ENCODE measurements at regions of chr19 and their contacts with region 1.

Region 1: DNA sequence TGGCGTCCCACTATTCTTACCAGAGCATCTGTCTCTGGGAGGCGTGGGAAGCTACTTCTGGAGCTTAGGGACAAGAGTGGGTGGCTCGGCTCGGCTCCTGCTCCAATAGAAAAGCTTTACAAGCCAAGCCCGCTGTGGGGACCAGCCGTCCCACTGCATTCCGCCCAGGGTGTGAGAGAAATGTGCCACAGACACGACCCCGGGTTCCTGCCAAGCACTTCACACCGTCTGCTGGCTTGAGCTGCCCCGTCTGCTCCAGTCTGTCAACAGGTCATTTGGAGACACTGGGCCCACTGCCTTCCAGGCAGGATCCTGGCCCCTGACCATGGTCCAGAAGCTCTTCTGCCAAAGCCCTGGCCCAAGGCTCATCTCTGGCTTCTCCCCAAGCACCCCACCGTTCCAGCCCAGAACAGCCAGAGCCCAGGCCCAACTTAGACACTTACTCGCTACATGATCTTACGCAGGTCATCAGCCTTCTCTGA is 6.5 kb upstream of the FKRP start:
- DNase-seq: no peak
- ATAC-seq: no peak
- H3K4me3 ChIP-seq: no peak overlapping the region
- H3K27ac ChIP-seq: no peak overlapping the region
- H3K4me1 ChIP-seq: peaks cover 28% of the 10 kb centered on the region
- H3K27me3 ChIP-seq: no peaks in the 10 kb centered on the region
- CTCF ChIP-seq: no peak
- POLR2A ChIP-seq: no peak
- RAD21 ChIP-seq: no peak

Region 2: GRCh38 chr19:46542428-46543230 is 196.7 kb before region 1 on chr19:
- CTCF ChIA-PET with region 1: no interaction called
- POLR2A ChIA-PET with region 1: no interaction called
- dilution Hi-C with region 1: no loop called
- in situ Hi-C with region 1: no loop called
- intact Hi-C with region 1: no loop called
- DNase-seq: peak; percentile 87
- ATAC-seq: peak; percentile 98
- H3K4me3 ChIP-seq: no peak overlapping the region
- H3K27ac ChIP-seq: no peak overlapping the region
- H3K4me1 ChIP-seq: no peaks in the 10 kb centered on the region
- H3K27me3 ChIP-seq: peaks cover 2% of the 10 kb centered on the region; the same call in 1 of the 2 replicates
- CTCF ChIP-seq: peak; percentile 83
- POLR2A ChIP-seq: no peak
- RAD21 ChIP-seq: peak; percentile 74

Region 3: DNA sequence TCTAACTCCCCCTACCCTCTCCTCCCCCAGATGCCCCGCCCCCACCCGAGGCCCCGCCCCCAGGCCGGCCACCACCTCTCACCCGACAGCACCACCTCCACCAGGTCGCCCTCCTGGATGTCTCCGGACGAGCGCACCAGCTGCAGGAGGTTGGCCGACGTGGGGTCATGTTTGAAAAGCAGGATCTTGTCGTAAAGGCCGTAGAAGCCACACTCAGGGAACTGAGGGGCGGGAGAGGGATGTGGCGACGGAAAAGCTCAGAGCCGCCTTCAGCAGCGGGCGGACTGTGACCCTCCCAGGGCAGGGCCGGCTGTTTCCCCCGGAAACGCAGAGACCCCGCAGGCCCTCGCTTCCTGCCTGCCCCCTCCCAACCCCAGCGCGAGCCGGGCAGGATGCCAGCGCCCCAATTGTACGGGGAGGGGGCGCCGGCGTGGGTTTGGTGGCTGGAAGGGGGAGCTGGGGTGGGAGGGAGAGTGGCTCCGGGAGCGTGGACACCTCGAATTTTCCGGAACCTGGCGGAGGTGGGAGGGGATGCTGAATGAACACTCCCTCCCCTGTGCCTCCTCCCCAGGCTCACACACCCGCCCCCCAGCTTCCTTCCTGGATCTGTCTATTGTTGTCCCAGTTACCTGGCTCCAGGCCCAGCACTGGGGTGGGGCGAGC is 25.4 kb before region 1 on chr19:
- CTCF ChIA-PET with region 1: no interaction called
- POLR2A ChIA-PET with region 1: interaction called, 19 read pairs
- dilution Hi-C with region 1: no loop called
- in situ Hi-C with region 1: no loop called
- intact Hi-C with region 1: no loop called
- DNase-seq: peak; percentile 63
- ATAC-seq: peak; percentile 22
- H3K4me3 ChIP-seq: peak overlapping the region; percentile 42
- H3K27ac ChIP-seq: peak overlapping the region; percentile 45
- H3K4me1 ChIP-seq: peaks cover 7% of the 10 kb centered on the region
- H3K27me3 ChIP-seq: no peaks in the 10 kb centered on the region
- CTCF ChIP-seq: no peak
- POLR2A ChIP-seq: no peak
- RAD21 ChIP-seq: no peak

Region 4: DNA sequence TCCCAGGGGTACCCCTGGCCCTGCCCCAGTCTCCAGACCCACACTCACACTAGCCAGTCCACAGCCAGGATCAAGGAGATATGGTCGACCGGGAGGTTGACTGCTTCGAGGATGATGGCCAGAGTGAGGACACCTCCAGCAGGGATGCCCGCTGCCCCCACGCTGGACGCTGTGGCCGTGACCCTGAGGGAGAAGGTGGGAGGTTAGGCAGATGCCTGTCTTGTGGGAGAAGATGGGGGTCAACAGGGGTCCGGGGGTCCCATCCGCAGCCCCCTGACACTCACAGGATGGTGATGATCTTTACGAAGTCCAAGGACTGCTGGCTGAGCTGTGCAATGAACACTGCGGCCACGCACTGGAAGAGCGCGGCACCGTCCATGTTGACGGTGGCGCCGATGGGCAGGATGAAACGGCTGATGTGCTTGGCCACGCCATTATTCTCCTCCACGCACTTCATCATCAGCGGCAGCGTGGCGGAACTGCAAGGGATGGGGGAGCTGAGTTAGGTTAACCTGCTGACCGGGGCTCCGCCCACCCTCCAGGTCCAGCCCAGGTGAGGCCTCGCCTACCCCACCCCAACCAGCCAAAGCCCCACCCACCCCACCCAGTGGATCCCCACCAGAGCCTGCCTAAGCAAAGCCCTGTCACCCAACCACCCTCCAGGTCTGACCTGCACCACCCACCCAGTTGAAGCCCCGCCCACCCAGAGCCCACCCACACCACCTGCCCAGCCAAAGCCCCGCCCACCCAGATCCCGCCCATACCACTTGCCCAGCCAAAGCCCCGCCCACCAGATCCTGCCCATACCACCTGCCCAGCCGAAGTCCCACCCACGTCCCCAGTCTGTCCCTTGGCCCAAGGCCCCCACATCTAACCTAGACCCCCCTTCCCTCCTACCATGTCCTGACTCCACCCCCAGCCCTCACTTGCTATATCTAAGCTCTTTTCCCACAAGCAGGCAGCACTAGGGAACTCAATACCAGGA is 37.9 kb after region 1 on chr19:
- CTCF ChIA-PET with region 1: no interaction called
- POLR2A ChIA-PET with region 1: no interaction called
- dilution Hi-C with region 1: no loop called
- in situ Hi-C with region 1: no loop called
- intact Hi-C with region 1: no loop called
- DNase-seq: no peak
- ATAC-seq: no peak
- H3K4me3 ChIP-seq: no peak overlapping the region
- H3K27ac ChIP-seq: no peak overlapping the region
- H3K4me1 ChIP-seq: no peaks in the 10 kb centered on the region; the same call in 1 of the 2 replicates
- H3K27me3 ChIP-seq: no peaks in the 10 kb centered on the region
- CTCF ChIP-seq: no peak
- POLR2A ChIP-seq: no peak
- RAD21 ChIP-seq: no peak

Measured in IMR-90 (cell line).